Vagina (tissue), 2 donors: ENCODE measurements at regions of chr22 and their contacts with region 1.

Region 1: GRCh38 chr22:31399211-31400028 is at the start of gene DRG1:
- DNase-seq: peak; percentile 93 to 96
- H3K4me3 ChIP-seq: peak within 1 kb of the TSS; percentile 86 to 94
- H3K27ac ChIP-seq: peak within 1 kb of the TSS; percentile 81
- H3K4me1 ChIP-seq: peaks cover 15% of the 10 kb centered on the region
- H3K27me3 ChIP-seq: no peaks in the 10 kb centered on the region
- CTCF ChIP-seq: no peak
- POLR2A ChIP-seq: peak in 1 of 2 donors; percentile 82
- total RNA-seq, gene DRG1: 42.0 TPM

Region 2: DNA sequence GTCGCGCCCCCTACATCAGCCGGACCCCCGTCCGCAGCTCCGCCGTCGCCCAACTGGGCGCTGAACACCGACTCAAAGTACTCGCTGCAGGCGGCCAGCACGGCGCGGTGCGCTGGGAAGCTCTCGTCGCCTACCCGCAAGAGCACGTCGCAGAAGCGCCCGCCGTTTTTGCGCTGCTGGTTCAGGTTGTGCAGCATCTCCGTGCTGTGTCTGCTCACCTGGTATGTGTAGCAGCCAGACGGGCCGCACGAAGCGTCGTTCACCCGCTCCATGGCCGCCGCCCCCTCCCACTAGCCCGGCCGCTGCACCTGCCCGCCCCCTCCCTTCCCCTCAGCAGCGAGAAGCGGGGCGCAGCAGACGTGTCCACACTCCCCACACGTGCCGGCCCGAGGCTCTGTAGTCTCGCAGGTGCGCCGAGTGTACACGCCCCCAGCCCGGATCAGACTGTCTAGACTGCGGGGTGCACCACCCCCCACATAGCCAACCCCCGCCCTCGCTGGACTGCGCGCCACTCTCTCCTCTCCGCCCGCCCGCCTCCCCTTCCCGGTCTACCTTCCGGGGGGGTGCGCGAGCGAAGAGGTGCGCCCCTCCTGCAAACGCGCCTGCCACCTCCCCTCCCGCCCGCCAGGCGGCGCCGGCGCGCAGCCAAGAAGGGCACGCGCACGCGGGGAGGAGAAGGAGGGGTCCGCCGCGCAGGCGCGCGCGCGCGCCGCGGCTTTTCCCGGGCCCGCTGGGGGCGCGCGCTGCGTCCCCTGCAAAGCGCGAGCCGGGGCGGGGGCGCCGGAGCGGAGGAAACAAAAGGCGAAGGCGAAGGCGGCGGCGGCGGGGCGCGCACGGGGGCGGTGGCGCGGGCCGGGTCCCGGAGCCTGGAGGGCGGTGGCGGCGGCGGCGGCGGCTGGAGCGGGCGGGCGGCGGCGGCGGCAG is 53.8 kb before region 1 on chr22:
- intact Hi-C with region 1: loop called (anchors 1 kb)
- DNase-seq: no peak
- H3K4me3 ChIP-seq: peak overlapping the region; percentile 73
- H3K27ac ChIP-seq: peak overlapping the region; percentile 89
- H3K4me1 ChIP-seq: peaks cover 50% of the 10 kb centered on the region
- H3K27me3 ChIP-seq: no peaks in the 10 kb centered on the region
- CTCF ChIP-seq: peak; percentile 69 to 93 (median 79)
- POLR2A ChIP-seq: no peak

Region 3: GRCh38 chr22:31378123-31378522 is 21.3 kb before region 1 on chr22:
- intact Hi-C with region 1: no loop called
- DNase-seq: no peak
- H3K4me3 ChIP-seq: no peak overlapping the region
- H3K27ac ChIP-seq: no peak overlapping the region
- H3K4me1 ChIP-seq: no peaks in the 10 kb centered on the region
- H3K27me3 ChIP-seq: no peaks in the 10 kb centered on the region
- CTCF ChIP-seq: no peak
- POLR2A ChIP-seq: no peak